HEK293 (cell line): ENCODE measurements at regions of chr12 and their contacts with region 1.

Region 1: DNA sequence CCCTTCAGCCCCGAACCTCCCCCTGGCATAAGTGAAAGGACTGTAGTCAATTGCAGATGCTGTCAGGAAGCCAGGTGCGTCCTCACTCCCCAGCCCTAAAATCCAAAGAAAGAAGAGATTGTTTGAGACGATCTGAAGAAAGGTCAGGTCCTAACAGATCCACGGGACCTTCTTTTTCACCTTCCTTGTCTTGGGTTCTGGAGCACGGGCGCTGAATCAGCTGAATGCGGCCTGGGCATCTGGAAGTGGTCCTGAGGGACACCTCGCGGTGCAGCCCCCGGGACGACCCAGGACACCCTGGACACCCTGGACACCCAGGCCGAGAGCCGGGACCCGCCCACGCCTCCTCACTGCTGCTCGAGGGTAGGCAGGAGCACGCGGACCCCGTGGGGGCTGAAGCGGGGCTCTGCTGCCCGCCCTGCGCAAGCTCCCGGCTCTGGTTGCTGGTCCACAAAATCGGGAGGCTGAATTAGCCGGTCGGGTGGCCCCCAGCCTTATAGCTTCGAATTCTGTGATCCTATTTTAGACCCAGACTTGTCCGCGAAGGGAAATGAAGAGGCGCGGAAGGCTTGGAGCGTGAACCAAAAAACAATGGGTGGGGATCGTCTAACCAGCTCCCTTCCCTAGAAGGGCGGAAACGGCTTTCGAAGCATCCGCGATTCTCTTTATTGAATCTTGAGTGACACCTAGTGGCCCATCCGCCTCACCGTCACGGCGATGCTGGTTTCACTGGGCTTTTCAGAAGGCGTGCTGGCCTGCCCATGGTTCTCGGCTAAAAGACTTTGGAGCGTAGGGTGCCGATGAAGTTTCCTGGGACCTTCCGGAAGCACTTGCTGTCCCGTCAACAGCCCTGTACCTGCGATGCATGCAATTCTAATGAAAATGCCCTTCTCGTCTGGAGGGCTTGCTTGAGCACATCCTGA is 46.4 kb upstream of the PLXNC1 start:
- H3K4me3 ChIP-seq: peak overlapping the region; percentile 42
- H3K27ac ChIP-seq: peak overlapping the region; percentile 60; the same call in 1 of the 2 replicates
- H3K4me1 ChIP-seq: no peaks in the 10 kb centered on the region
- CTCF ChIP-seq: peak; percentile 85

Region 2: DNA sequence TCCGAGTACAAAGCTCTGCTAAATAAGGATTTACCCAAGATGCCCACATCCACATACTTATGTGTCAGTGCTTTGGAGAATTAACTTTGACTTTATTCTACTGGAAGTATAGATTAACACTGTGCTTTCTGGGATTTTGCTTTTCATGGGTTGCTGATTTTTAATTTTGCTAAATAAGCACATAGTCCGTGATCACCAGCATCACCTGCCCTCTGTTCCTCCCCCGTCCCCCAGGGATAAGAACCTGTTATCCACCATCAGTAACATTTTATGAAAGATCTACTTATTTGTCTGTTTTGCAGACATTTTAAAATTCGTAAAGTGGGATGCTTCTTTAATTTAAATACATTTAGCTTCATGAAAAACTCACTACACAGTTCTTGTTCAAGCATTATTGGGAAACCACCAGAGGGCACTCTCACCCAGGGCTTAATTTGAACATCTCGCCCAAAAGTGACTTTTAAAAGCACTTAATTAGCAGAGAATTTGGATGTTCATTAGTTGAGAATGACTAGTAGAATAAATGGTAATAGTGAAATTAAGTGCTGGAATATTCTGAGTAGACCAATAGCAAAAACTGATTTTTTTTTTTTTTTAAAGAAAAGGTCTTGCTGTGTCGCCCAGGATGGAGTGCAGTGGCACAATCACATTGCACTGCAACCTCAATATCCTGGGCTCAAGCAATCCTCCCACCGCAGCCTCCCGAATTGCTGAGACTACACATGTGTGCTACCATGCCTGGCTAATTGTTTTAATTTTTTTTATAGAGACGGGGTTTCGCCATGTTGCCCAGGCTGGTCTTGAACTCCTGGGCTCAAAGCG is 599.0 kb before region 1 on chr12:
- CTCF ChIA-PET with region 1: interaction called, 127 read pairs
- POLR2A ChIA-PET with region 1: interaction called, 6 read pairs
- H3K4me3 ChIP-seq: no peak overlapping the region
- H3K27ac ChIP-seq: no peak overlapping the region
- H3K4me1 ChIP-seq: no peaks in the 10 kb centered on the region
- CTCF ChIP-seq: peak; percentile 38; the same call in 1 of the 2 replicates

Region 3: DNA sequence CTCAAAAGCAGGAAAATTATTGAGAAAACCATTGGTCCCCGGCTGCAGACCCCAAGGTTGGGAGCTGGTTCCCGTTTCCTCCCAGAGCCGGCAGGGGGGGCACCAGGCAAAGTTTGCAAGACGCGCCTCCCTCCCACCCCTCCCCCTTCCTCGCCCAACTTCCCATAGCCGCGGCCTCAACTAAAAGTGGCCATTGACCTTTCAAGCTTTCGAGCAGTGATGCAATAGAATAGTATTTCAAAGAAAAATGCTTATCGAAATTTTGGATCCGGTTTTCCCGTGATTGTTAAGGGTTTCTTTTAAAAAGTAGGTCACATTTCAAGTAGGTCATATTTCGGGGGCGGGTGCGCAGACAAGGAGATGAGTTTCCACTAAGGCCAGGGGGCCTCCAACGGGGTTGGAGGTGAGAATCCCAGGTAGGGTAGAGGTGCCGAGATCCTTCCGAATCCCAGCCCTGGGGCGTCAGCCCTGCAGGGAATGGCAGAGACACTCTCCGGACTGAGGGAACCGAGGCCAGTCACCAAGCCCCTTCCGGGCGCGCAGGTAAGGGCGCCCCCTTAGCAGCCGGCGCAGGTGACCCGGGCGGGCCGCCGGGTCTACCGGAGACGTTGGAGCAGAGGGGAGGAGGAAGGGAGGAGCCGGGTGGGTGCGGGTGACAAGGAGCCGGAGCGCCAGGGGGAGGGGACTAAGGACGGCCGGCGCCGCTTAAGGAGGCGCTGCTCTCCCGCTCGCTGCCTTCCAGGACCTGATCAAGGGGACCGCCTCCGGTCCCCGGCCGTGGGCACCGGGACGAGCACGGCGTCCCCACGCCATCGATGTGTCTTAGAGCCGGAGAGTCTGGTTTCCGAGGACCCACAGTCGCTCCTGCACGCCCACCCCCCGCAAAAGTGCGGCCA is 532.1 kb before region 1 on chr12:
- CTCF ChIA-PET with region 1: interaction called, 60 read pairs
- POLR2A ChIA-PET with region 1: interaction called, 4 read pairs
- H3K4me3 ChIP-seq: peak overlapping the region; percentile 53
- H3K27ac ChIP-seq: peak overlapping the region; percentile 94
- H3K4me1 ChIP-seq: no peaks in the 10 kb centered on the region
- CTCF ChIP-seq: peak; percentile 69

Region 4: DNA sequence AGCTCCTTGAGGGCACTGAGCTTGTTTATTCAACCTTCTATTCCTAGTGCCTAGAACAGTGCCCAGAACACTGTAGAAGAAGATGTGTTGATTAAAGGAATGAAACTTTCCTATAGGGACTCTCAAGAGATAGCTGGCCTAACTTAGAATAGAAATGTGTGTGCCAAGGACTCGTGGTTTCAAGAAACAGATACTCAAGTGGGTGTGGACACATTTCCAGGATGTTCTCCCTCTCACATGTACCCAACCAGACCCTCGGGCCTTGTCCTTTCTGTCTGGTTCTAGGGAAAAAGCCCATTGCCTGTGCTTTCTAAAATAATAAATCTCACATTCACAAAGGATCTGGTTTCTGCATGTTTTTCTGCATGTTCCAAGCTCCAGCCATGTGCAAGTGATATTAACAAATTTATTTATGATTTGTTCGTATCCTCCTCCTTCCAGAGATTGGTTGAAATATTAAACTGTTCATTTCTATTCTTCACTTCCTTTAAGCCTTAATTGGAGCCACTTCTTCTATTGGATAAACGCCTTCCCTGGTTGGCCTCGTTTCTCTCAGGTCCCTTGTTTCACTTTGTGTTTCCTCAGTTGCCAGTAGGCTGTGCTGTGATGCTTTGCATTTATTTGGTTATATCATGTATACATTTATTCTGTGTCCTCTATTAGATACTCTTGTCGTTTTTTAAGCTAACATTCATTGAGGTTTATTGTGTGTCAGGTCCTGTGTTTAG is 335.0 kb before region 1 on chr12:
- CTCF ChIA-PET with region 1: interaction called, 53 read pairs
- POLR2A ChIA-PET with region 1: no interaction called
- H3K4me3 ChIP-seq: no peak overlapping the region
- H3K27ac ChIP-seq: no peak overlapping the region
- H3K4me1 ChIP-seq: no peaks in the 10 kb centered on the region; the same call in 1 of the 2 replicates
- CTCF ChIP-seq: peak; percentile 29; the same call in 1 of the 2 replicates

Region 5: GRCh38 chr12:94074980-94075928 is 26.7 kb before region 1 on chr12:
- CTCF ChIA-PET with region 1: interaction called, 55 read pairs
- POLR2A ChIA-PET with region 1: no interaction called
- H3K4me3 ChIP-seq: no peak overlapping the region
- H3K27ac ChIP-seq: no peak overlapping the region
- H3K4me1 ChIP-seq: no peaks in the 10 kb centered on the region
- CTCF ChIP-seq: peak; percentile 33; the same call in 1 of the 2 replicates